Uterus (tissue), 4 donors: ENCODE measurements at regions of chr7 and their contacts with region 1.

Region 1: DNA sequence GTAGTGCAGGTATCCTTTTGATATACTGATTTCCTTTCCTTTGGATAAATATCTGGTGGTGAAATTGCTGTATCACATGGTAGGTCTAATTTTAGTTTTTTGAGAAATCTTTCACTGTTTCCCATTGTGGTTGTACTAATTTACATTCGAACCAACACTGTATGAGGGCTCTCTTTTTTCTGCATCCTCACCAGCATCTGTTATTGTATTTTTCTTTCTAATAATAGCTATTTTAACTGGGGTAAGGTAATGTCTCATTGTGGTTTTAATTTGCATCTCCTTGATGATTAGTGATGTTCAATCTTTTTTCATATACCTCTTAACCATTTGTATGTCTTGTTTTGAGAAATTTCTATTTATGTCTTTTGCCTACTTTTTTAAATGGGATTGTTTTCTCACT is 335.4 kb upstream of the MTPN start:
- DNase-seq: no peak
- H3K4me3 ChIP-seq: no peak overlapping the region
- H3K27ac ChIP-seq: no peak overlapping the region
- H3K4me1 ChIP-seq: no peaks in the 10 kb centered on the region
- H3K27me3 ChIP-seq: no peaks in the 10 kb centered on the region
- CTCF ChIP-seq: no peak
- POLR2A ChIP-seq: no peak

Region 2: DNA sequence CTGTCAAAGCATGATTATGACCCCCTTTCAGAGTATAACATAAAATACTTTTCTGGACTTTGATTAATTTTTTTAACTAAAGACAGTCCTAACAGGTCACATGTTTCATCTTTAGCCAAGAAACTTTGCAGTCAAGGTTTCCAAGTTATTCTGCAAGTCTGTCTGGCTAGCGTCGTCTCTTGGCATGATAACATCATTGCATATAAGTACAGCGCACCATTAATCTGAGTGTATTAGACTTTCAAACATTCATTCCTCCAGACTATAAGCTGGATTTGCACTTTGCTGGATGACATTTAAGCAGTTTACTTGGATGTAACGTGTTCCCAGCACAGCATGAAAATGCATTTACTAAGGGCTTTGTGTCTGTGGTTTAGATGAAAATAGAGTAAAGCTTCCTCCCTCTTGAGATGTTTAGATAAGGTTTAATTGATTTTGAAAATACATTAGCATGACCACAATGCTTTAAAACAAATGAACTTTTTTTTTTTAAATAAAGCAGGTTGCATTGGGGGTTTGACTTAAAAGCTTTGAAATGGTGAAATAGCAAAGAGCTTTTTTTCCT is 13.5 kb after region 1 on chr7:
- intact Hi-C with region 1: loop called (anchors 2 kb)
- DNase-seq: no peak
- H3K4me3 ChIP-seq: no peak overlapping the region
- H3K27ac ChIP-seq: no peak overlapping the region
- H3K4me1 ChIP-seq: no peaks in the 10 kb centered on the region
- H3K27me3 ChIP-seq: no peaks in the 10 kb centered on the region
- CTCF ChIP-seq: no peak
- POLR2A ChIP-seq: no peak